ENCODE measurements at regions of chr12 and their contacts with region 1.

Region 1: DNA sequence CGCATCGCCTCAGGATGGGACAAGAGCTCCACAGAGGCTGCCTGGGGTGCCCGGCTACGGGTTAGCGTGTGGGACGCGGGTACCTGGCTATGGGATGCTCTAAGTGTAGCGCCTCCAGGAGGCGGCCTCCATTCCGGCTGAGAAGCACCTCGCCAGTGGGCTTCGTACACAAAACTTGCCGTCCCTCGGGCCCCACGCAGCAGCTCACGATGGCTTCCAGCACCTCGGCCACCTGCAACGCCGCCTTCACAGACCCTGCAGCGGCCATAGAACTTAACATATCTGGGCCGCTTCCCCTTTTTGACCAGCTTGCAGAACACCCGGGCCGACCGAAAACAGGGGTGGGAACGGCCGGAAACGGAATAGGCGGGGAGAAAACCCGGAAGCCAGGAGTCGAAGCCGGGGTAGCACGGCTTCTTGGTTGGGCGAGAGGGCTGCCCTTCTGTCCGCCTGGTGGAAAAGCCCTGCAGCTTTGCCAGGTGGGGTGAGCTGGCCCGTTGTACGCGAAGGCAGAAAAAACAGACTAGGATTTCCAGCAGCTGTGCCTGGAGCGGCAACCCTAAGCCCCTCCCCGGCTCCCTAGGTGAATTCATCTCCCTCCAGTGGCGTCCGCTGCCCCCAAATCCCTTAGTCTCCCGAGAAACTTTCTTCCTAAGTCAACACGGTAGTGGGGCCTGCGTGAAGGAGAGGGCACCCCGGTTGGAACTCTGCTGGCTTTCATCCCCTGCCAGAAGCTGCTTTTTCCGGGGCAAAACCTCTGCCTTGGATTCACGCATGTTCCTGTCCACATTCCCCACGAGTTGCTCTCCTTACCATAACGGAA is at the start of gene BBS10:
- DNase-seq: peak; percentile 92
- H3K4me3 Mint-ChIP-seq: peak within 1 kb of the TSS; percentile 86
- H3K27ac Mint-ChIP-seq: peak within 1 kb of the TSS; percentile 39
- H3K4me1 Mint-ChIP-seq: peaks cover 17% of the 10 kb centered on the region
- H3K27me3 Mint-ChIP-seq: no peaks in the 10 kb centered on the region
- CTCF ChIP-seq: peak; percentile 40
- total RNA-seq, gene BBS10: 5.9 and 10.2 TPM in 2 replicates

Region 2: GRCh38 chr12:75814851-75815754 is 533.2 kb before region 1 on chr12:
- CTCF ChIA-PET with region 1: interaction called, 4 read pairs
- POLR2A ChIA-PET with region 1: no interaction called
- intact Hi-C with region 1: loop called (anchors 1 kb)
- DNase-seq: peak; percentile 37
- H3K4me3 Mint-ChIP-seq: no peak overlapping the region
- H3K27ac Mint-ChIP-seq: peak overlapping the region; percentile 37
- H3K4me1 Mint-ChIP-seq: peaks cover 8% of the 10 kb centered on the region
- H3K27me3 Mint-ChIP-seq: no peaks in the 10 kb centered on the region
- CTCF ChIP-seq: no peak

Region 3: GRCh38 chr12:76055393-76055792 is 292.9 kb before region 1 on chr12:
- CTCF ChIA-PET with region 1: interaction called, 5 read pairs
- POLR2A ChIA-PET with region 1: interaction called, 18 read pairs
- intact Hi-C with region 1: loop called (anchors 5 kb)
- DNase-seq: no peak
- H3K4me3 Mint-ChIP-seq: no peak overlapping the region
- H3K27ac Mint-ChIP-seq: no peak overlapping the region
- H3K4me1 Mint-ChIP-seq: no peaks in the 10 kb centered on the region
- H3K27me3 Mint-ChIP-seq: no peaks in the 10 kb centered on the region
- CTCF ChIP-seq: no peak

Region 4: DNA sequence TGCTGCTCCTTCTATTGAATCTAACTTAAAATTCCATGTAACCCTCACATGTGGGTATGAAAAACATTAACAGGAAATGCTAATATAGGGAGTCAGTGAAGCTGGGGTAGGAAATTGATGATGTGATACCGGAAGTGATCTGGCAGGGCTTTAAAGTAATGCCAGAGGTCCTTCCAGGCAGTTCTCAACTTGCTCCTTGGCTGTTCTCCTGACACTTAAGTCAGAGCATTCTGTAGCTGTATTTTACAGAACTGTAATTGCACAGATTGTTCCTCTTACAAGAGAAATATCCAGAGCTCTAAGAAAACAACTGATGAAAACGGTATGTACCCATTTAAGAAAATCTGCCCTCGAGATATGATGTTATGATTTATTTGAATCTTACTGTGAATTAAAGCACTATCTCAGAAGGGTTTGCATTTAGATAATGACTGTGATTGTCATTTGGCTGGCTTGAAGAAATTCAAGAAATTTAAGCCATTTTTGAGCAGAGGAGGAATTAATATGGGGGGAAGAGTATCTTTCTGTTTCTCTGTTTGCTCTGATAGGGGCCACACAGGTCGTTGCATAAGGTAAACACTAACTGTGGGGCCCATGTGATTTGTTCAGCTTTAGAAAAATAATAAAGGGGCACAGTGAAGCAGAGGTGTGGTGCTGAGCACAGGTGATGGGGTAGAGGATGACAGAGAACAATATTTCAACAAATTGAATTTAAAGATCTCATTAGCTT is 88.5 kb before region 1 on chr12:
- CTCF ChIA-PET with region 1: no interaction called
- POLR2A ChIA-PET with region 1: interaction called, 19 read pairs
- intact Hi-C with region 1: no loop called
- DNase-seq: peak; percentile 72
- H3K4me3 Mint-ChIP-seq: peak overlapping the region; percentile 65
- H3K27ac Mint-ChIP-seq: peak overlapping the region; percentile 50
- H3K4me1 Mint-ChIP-seq: peaks cover 24% of the 10 kb centered on the region
- H3K27me3 Mint-ChIP-seq: no peaks in the 10 kb centered on the region
- CTCF ChIP-seq: no peak

Region 5: GRCh38 chr12:76559400-76560085 is 211.3 kb after region 1 on chr12 and contains the start of gene OSBPL8:
- CTCF ChIA-PET with region 1: interaction called, 3 read pairs
- POLR2A ChIA-PET with region 1: interaction called, 11 read pairs
- intact Hi-C with region 1: loop called (anchors 1 kb)
- DNase-seq: peak; percentile 95
- H3K4me3 Mint-ChIP-seq: peak within 1 kb of the TSS; percentile 89
- H3K27ac Mint-ChIP-seq: peak within 1 kb of the TSS; percentile 95
- H3K4me1 Mint-ChIP-seq: peaks cover 24% of the 10 kb centered on the region
- H3K27me3 Mint-ChIP-seq: no peaks in the 10 kb centered on the region
- CTCF ChIP-seq: no peak
- total RNA-seq, gene OSBPL8: 71.1 and 77.2 TPM in 2 replicates